GM10248 (cell line): ENCODE measurements at regions of chr1 and their contacts with region 1.

Region 1: DNA sequence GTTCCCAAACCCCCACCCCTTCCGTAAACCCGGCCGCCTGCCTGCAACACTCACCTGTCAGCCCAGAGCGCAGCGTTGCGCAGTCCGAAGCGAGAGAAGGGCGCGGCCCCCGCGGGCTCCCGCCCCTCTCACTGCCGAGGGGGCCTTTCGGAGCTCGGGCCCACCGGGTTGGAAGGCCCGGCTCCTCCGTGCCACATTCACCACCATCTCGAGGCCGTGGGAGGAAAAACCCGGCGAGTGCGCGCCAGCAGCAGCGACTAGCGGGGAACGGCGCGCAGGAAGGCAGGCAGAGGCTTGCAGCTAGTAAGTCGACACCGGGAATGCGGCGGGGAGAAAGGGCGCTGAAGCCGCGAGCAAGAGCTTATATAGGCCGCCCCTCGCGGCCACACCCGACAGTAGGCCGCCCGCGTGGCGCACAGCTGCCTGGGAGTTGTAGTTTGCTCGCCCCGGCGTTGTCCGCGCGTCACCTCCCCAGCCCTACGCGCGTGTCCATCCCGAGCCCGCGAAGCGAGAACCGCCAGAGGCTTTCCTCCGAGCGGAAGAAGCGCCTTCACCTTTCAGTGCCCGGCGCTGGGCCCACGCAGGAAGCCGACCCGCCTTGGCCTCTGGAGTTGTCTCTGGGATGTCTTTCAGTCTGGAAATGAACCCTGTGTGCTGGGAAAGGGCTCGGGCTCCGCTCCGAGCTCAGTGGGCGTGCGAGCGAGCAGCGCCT is 10.4 kb upstream of the RAB42 start:
- DNase-seq: peak; percentile 96
- CTCF ChIP-seq: no peak

Region 2: DNA sequence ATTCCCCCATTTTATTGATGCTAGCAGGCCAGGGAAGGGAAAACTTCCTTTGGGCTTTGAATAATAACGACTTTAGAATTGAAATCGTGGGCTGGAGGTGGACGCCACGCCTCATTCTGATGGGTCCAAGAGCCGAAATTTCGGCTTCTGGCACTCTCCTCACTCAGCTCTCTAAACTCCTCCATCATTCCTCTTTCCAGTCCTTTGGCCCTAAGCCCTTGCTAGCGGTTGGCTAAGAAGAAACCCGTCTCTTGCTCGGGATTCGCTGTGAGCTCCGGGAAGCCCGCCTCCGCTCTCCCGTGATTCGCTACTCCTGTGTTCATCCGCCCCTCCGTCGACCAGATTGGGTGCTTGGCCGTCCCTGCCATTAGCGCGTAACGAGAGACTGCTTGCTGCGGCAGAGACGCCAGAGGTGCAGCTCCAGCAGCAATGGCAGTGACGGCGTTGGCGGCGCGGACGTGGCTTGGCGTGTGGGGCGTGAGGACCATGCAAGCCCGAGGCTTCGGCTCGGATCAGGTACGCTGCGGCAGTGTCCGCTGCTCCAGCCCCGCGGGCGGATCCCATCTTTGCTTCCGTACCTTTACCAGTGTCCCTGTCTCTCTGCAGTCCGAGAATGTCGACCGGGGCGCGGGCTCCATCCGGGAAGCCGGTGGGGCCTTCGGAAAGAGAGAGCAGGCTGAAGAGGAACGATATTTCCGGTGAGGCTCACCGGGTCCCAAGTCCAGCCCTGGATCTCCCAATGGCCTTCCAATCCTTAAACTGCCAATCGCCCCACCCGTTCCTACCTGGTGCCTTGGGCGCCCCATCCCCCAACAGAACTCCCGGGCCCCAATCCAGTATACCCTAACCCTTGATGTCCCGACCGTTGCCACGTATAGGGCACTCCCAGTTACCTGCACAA is 345.7 kb before region 1 on chr1 and contains the start of gene ATP5IF1:
- CTCF ChIA-PET with region 1: no interaction called
- POLR2A ChIA-PET with region 1: interaction called, 13 read pairs
- DNase-seq: peak; percentile 99
- CTCF ChIP-seq: no peak

Region 3: DNA sequence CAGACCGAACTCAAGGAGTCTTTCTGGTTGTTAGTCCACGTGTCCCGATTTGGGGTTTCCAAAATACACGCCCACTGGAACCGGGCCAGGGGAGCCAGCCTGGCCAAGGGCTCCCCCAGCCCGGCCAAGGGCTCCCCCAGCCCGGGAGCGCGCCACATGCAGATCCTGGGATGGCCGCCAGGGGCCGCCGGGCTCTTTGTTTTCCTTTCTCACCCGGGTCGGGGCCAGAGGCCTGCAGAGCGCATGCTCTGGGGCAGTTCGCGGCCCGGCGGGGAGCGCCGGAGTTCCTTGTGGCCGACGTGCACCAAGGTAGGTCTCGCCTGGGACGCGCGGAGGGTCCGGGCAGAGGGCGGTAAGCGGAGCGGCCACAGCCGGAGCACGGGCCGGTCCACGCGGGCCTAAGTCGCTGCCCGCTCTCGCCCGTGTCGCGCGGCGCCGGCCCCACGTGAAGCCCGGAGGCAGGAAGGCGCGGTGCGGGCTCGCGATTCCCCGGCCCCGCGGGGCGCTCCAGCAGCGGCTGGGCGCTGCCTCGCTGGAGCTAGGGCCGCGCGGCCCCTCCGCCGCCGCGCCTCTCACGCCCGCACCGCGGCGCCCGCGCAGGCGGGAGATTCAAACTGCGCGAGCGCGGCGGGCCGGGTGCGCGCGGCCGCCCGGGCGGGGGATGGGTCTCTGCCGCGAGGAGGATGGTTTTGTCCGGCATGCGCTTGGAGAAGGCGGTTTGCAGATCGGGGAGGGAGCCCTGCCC is 63.5 kb before region 1 on chr1:
- CTCF ChIA-PET with region 1: interaction called, 3 read pairs
- POLR2A ChIA-PET with region 1: interaction called, 14 read pairs
- DNase-seq: peak; percentile 91
- CTCF ChIP-seq: peak; percentile 91

Region 4: GRCh38 chr1:28565040-28565439 is 16.7 kb before region 1 on chr1:
- CTCF ChIA-PET with region 1: interaction called, 7 read pairs
- POLR2A ChIA-PET with region 1: interaction called, 45 read pairs
- DNase-seq: no peak
- CTCF ChIP-seq: no peak

Region 5: DNA sequence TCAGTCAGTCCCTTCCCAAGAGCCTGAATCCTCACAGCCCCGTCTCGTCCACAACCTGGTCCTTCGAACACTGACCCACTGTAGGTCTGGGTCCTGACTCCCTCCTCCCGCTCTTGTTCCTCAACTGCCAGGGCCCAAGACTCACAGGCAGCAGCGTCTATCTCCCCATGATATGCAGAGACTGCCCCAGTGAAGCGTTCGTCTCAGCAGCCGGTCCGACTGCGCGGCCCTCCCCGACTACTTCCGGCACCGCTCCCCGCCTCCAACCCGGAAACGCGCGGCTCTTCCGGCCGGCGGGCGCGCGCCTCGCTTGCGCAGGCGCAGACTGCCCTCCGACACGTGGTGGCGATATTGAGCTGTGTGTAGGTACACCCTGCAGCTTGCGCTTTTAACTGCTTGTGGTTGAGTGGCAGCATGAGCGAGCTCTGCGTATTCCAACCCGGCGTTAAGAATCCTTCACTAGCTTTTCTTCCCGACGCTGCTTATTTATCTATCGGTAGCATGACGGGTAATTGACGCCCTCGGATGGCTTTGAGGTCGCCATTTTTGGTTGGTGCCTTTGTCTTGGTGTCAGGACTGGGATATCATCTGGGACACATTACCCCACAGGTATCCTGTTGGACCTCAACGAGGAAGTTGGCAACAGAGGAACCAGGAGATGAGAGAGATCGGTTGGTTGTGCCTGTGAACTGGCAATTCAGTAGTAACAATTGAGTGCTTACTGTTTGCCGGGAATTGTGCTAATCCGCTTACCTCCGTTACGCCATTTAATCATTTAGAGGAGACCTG is 61.3 kb after region 1 on chr1 and contains the start of gene TAF12:
- CTCF ChIA-PET with region 1: interaction called, 3 read pairs
- POLR2A ChIA-PET with region 1: interaction called, 49 read pairs
- DNase-seq: peak; percentile 90
- CTCF ChIP-seq: peak; percentile 56

Region 6: GRCh38 chr1:28736450-28737306 is 155.0 kb after region 1 on chr1 and contains the start of gene YTHDF2:
- CTCF ChIA-PET with region 1: interaction called, 3 read pairs
- POLR2A ChIA-PET with region 1: interaction called, 15 read pairs
- DNase-seq: peak; percentile 96
- CTCF ChIP-seq: peak; percentile 92